Right ventricle myocardium inferior (tissue), 1 donor: ENCODE measurements at regions of chr7 and their contacts with region 1.

Region 1: DNA sequence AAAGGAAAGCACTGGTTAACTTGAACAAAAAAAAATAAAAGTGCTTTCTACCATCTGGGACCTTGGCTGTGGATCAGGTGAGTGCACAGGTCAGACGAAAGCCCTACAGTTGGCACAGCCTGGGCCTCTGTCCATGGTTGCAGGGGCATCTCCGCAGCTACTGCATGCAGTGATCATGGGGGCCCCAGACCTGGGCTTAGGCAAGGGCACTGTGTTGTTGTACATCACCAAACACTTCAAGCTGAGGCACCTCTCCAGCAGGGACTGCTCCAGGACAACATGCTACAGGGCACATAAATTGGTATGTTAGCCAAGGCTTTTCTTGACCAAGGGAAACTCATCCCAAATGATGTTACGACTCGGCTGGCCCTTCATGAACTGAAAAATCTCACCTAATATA is 23.5 kb downstream of the KLHL7 start:
- DNase-seq: no peak
- ATAC-seq: peak; percentile 93

Region 2: DNA sequence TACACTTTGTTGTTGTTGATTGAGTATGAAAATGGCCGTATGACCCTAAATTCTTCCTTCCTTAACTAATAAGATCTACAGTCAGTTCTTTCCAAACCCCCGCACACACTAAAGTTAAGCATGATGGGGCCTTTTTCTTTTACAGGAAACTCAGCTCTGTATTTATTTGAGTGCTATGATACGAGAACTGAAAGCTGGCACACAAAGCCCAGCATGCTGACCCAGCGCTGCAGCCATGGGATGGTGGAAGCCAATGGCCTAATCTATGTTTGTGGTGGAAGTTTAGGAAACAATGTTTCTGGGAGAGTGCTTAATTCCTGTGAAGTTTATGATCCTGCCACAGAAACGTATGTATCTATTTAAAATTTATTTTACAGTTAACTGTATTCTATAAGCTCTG is 38.7 kb after region 1 on chr7:
- intact Hi-C with region 1: loop called (anchors 5 kb)
- DNase-seq: no peak
- ATAC-seq: no peak